ENCODE measurements at regions of chr12 and their contacts with region 1.

Region 1: GRCh38 chr12:132124766-132125430 is 19.2 kb downstream of the DDX51 start:
- DNase-seq: no peak
- ATAC-seq: no peak
- H3K4me3 ChIP-seq: no peak overlapping the region
- H3K4me3 Mint-ChIP-seq: no peak overlapping the region
- H3K27ac ChIP-seq: no peak overlapping the region
- H3K27ac Mint-ChIP-seq: no peak overlapping the region
- H3K4me1 ChIP-seq: no peaks in the 10 kb centered on the region
- H3K4me1 Mint-ChIP-seq: no peaks in the 10 kb centered on the region
- H3K27me3 ChIP-seq: no peaks in the 10 kb centered on the region
- H3K27me3 Mint-ChIP-seq: no peaks in the 10 kb centered on the region
- CTCF ChIP-seq: no peak

Region 2: GRCh38 chr12:132069336-132069985 is 55.4 kb before region 1 on chr12:
- CTCF ChIA-PET with region 1: no interaction called
- POLR2A ChIA-PET with region 1: no interaction called
- intact Hi-C with region 1: loop called in 1 of 2 experiments (anchors 2 kb)
- DNase-seq: no peak
- ATAC-seq: no peak
- H3K4me3 ChIP-seq: no peak overlapping the region
- H3K4me3 Mint-ChIP-seq: no peak overlapping the region
- H3K27ac ChIP-seq: no peak overlapping the region
- H3K27ac Mint-ChIP-seq: no peak overlapping the region
- H3K4me1 ChIP-seq: peaks cover 26% of the 10 kb centered on the region
- H3K4me1 Mint-ChIP-seq: peaks cover 27% of the 10 kb centered on the region
- H3K27me3 ChIP-seq: no peaks in the 10 kb centered on the region
- H3K27me3 Mint-ChIP-seq: no peaks in the 10 kb centered on the region
- CTCF ChIP-seq: no peak

Region 3: DNA sequence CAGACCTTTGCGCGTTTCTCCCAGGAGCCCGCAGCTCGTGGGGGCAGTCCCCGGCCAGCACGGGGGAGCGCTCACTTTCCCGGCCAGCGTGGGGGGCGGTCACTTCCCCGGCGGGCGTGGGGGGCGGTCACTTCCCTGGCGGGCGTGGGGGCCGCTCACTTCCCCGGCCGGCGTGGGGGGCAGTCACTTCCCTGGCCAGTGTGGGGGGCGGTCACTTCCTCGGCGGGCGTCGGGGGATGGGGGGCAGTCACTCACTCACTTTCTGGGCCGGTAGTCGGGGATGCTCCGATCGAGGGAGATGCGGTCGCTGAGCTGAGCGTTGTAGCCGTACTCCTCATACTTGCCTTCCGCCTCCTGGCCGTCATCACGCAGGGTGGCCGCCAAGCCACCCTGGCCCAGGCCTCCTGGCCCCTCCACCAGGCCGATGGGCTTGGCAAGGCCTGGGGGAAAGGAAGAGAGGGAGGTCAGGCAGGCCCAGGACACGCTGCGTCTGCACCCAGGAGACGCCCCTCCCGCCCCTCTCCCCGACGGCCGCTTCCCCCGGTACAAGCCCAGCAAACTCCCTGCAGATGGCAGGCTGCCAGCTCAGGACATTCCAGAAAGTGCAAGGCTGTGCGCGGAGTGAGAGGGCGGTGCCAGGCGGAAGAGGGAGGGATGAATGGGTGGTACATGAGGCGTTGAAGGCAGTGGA is 161.2 kb after region 1 on chr12:
- CTCF ChIA-PET with region 1: no interaction called
- POLR2A ChIA-PET with region 1: no interaction called
- intact Hi-C with region 1: no loop called
- DNase-seq: peak in 1 of 14 experiments; percentile 6
- ATAC-seq: no peak
- H3K4me3 ChIP-seq: no peak overlapping the region
- H3K4me3 Mint-ChIP-seq: no peak overlapping the region
- H3K27ac ChIP-seq: no peak overlapping the region
- H3K27ac Mint-ChIP-seq: no peak overlapping the region
- H3K4me1 ChIP-seq: peaks cover 37% of the 10 kb centered on the region
- H3K4me1 Mint-ChIP-seq: no peaks in the 10 kb centered on the region
- H3K27me3 ChIP-seq: peaks cover 10 to 18% of the 10 kb centered on the region in 2 experiments
- H3K27me3 Mint-ChIP-seq: peaks cover 34% of the 10 kb centered on the region
- CTCF ChIP-seq: no peak